ENCODE measurements at regions of chr10 and their contacts with region 1.

Region 1: GRCh38 chr10:125160856-125161706 is 718 bp upstream of the CTBP2 start:
- DNase-seq: peak; percentile 81 to 86 (median 83)
- H3K4me3 ChIP-seq: peak overlapping the region; percentile 78 to 94 (median 80)
- H3K4me3 Mint-ChIP-seq: peak overlapping the region; percentile 81 to 90
- H3K27ac ChIP-seq: peak overlapping the region; percentile 74 to 87
- H3K27ac Mint-ChIP-seq: peak overlapping the region; percentile 59 to 90 (median 77)
- H3K4me1 ChIP-seq: peaks cover 25 to 39% of the 10 kb centered on the region in 2 donors
- H3K4me1 Mint-ChIP-seq: peaks cover 30% of the 10 kb centered on the region
- H3K27me3 ChIP-seq: peaks cover 0 to 8% of the 10 kb centered on the region in 2 donors
- H3K27me3 Mint-ChIP-seq: peaks cover 10 to 18% (median 16%) of the 10 kb centered on the region in 3 donors
- CTCF ChIP-seq: peak; percentile 74

Region 2: DNA sequence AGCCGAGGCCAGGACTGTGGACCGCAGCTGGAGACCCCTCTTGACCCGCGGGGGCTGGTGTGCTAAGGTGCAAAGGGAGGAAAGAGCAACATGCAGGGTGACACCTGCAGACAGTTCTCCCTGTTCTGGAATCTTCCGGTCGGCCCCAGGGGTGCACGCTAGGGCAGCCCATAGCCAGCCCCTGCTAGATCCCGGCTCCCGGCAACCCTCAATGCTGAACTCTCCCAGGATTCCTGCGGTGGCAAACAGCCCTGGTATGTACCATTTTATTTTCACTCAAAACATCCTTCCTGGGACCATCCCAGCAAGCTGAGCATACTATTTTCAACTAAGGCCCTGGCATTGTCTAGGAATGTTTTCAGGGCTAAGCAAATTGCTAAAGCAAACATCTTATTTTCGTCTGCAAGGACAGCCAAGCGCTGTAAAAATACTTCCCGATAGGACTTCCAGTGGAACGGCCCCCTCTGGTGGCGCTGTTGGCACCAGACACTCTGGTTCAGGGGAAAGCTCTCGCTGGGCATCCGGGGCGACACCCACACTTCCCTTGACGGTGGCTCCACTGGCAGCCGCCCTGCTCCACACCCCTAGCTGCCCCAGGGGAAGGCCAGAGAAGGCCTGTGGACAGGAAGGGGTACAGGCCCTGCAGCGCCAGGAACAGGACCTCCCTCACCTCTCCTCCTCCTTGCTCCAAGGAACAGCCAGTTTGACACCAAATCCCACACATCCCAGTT is 100.1 kb before region 1 on chr10:
- intact Hi-C with region 1: loop called in 1 of 2 experiments (anchors 5 kb)
- DNase-seq: peak; percentile 64 to 78 (median 72)
- H3K4me3 ChIP-seq: peak overlapping the region in 1 of 3 experiments; percentile 58
- H3K4me3 Mint-ChIP-seq: peak overlapping the region in 1 of 2 donors; percentile 82
- H3K27ac ChIP-seq: peak overlapping the region; percentile 41 to 62
- H3K27ac Mint-ChIP-seq: peak overlapping the region; percentile 74 to 92 (median 90)
- H3K4me1 ChIP-seq: peaks cover 72 to 87% of the 10 kb centered on the region in 2 donors
- H3K4me1 Mint-ChIP-seq: peaks cover 81% of the 10 kb centered on the region
- H3K27me3 ChIP-seq: no peaks in the 10 kb centered on the region
- H3K27me3 Mint-ChIP-seq: peaks cover 0 to 6% (median 2%) of the 10 kb centered on the region in 3 donors
- CTCF ChIP-seq: peak; percentile 87

Region 3: DNA sequence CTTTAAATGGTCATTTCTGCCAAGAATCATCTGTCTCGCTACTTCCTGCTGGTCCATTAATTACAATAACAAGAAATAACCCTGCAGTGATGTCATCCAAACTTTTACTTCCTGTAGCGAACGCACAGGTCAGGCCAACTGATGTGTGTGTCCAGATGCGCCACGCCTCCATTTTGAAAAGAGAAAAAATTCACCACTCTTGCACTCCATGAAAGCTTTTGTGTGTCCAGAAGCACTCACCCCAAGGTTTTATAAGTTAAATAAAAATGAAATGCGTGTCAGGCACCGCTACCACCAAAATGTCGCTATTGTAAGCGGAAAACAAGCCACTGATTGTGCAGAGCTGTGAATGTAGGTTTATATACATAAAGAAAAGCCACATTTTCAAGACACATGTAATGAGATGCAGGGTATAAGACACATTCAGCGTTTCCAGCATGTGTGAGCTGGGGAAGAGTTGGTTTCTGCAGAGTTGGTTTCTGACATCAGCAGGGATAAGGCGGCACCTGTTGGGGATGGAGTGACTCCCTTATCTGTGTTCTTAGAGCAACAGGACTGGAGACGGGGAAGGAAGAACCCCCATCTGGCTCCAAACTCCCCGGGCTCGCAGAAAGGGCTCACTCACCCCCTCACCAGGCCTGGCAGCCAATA is 84.1 kb before region 1 on chr10:
- intact Hi-C with region 1: no loop called
- DNase-seq: no peak
- H3K4me3 ChIP-seq: no peak overlapping the region
- H3K4me3 Mint-ChIP-seq: no peak overlapping the region
- H3K27ac ChIP-seq: peak overlapping the region in 1 of 2 donors; percentile 17
- H3K27ac Mint-ChIP-seq: peak overlapping the region in 4 of 7 donors; percentile 2 to 37 (median 32)
- H3K4me1 ChIP-seq: no peaks in the 10 kb centered on the region
- H3K4me1 Mint-ChIP-seq: peaks cover 2% of the 10 kb centered on the region
- H3K27me3 ChIP-seq: no peaks in the 10 kb centered on the region
- H3K27me3 Mint-ChIP-seq: no peaks in the 10 kb centered on the region
- CTCF ChIP-seq: no peak

Region 4: DNA sequence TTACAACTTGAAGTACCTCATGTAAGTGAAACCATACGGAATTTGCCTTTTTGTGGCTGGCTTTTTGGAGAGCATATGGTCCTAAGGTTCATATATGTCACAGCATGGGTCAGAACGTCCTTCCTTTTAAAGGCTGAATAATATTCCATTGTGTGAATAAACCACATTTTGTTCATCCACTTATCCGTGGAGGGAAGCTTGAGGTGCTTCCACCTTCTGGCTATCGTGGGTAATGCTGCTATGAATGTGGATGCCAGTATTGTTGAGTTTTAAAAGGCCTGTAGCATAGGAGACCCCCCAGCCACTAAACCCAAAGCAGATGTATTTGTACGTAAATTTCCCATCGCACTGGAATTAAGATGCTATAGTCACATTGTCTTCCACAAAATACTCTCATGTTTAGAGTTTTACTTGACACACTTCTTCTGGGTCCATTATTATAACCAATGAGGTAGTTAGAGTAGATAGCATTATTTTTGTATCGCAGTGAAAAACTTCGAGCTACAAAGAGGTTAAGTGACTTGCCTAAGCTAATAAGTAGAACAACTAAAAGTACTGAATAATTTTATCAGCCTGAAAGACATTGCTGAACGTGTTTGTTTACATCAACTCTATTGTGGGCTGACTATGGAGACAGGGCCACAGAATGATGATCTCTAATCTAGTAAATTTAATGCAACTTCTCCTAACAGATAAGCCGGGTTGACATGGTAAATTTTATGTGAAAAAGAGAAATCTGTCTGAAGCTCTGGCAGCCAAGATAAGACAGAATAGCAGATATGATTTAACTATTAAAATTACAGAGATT is 182.2 kb after region 1 on chr10:
- intact Hi-C with region 1: loop called (anchors 5 to 10 kb)
- DNase-seq: peak; percentile 2 to 8 (median 4)
- H3K4me3 ChIP-seq: no peak overlapping the region
- H3K4me3 Mint-ChIP-seq: no peak overlapping the region
- H3K27ac ChIP-seq: no peak overlapping the region
- H3K27ac Mint-ChIP-seq: no peak overlapping the region
- H3K4me1 ChIP-seq: no peaks in the 10 kb centered on the region
- H3K4me1 Mint-ChIP-seq: no peaks in the 10 kb centered on the region
- H3K27me3 ChIP-seq: no peaks in the 10 kb centered on the region
- H3K27me3 Mint-ChIP-seq: peaks cover 3 to 5% (median 4%) of the 10 kb centered on the region in 3 donors
- CTCF ChIP-seq: peak; percentile 62

Region 5: DNA sequence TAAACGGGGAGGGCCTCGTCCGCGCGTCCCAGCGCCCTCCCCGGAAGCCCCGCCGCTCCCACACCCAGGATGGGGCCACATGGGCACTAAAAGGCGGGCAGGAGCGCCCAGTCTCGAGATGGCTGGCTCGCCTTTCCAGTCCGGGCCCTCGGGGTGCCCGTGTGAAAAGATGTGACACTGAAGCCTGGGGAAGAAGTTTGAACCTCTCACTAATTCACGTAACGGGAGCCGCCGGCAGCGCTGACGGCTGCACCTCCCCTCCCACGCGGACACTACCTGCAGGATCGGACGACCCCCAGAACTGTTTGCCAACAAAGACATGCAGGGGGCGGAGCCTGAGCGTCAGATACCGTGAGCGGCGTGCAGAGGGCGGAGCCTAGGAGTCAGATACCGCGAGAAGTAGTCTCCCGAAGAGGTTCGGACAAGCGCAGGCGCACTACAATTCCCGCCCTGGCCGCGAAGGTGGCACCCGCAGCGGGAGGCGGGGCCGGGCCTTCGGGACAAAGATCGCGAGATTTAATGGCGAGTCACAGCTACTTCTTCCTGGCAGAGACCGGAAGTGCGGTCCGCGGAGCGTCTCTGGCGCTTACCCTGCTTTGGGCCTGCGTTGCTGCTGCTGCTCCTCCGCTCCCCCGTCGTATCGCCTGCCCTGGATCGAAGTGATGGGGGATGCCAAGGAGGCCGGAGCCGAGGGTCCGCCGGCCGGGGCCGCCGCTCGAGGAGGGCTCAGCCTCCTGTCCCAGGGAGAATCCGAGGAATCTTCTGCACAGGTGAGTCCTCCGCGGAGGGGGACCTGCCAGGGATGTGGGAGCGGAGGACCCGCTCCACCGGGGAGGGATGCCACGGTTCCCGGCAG is 558.3 kb after region 1 on chr10 and contains the start of gene EDRF1:
- intact Hi-C with region 1: loop called in 1 of 2 experiments (anchors 10 kb)
- DNase-seq: peak; percentile 98 to 99 (median 98)
- H3K4me3 ChIP-seq: peak within 1 kb of the TSS; percentile 86 to 99 (median 92)
- H3K4me3 Mint-ChIP-seq: peak within 1 kb of the TSS; percentile 98
- H3K27ac ChIP-seq: peak within 1 kb of the TSS; percentile 78 to 99
- H3K27ac Mint-ChIP-seq: peak within 1 kb of the TSS; percentile 92 to 98 (median 96)
- H3K4me1 ChIP-seq: peaks cover 14 to 25% of the 10 kb centered on the region in 2 donors
- H3K4me1 Mint-ChIP-seq: peaks cover 15% of the 10 kb centered on the region
- H3K27me3 ChIP-seq: no peaks in the 10 kb centered on the region
- H3K27me3 Mint-ChIP-seq: peaks cover 0 to 2% (median 0%) of the 10 kb centered on the region in 3 donors
- CTCF ChIP-seq: no peak
- polyA plus RNA-seq, gene EDRF1: 4.6 to 21.4 (median 5.3) TPM

Region 6: DNA sequence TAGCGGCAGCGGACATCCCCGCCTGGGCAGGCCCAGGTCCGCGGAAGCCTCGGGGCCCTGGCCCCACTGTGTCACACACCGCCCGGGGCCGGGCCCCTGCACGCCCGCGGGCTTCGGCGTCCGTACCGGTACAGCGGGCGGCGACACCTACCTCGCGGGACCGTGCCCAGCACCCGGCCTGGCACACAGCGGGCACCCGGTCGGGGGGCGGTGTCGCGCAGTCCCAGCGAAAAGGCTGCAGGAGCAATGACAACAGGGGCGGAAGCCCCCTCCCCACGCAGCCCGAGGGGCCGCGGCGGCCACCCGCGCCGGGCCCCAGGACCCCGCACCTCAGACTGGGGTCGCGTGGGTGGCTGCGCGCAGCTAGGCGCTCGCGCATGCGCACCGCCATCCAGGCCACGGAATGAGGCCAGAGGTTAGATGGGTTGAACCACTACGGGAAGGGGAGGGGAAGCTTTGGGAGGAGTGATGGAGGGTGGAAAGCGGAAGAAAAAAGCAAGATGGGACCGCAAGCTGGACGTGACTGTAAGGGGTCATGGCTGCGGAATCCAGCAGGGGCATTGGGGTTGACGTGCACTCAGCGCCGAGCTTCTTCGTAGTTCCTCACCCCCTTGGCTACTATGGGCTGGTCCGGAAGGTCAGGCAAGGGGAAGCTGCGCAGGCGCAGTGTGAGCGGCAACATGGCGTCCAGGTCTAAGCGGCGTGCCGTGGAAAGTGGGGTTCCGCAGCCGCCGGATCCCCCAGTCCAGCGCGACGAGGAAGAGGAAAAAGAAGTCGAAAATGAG is 662.0 kb after region 1 on chr10 and contains the starts of genes BCCIP and UROS:
- intact Hi-C with region 1: loop called (anchors 10 kb)
- DNase-seq: peak; percentile 93 to 96 (median 93)
- H3K4me3 ChIP-seq: peak within 1 kb of the TSS; percentile 85
- H3K4me3 Mint-ChIP-seq: peak within 1 kb of the TSS; percentile 75
- H3K27ac ChIP-seq: peak within 1 kb of the TSS; percentile 83 to 93
- H3K27ac Mint-ChIP-seq: peak within 1 kb of the TSS in 6 of 7 donors; percentile 31 to 80 (median 39)
- H3K4me1 ChIP-seq: peaks cover 30 to 33% of the 10 kb centered on the region in 2 donors
- H3K4me1 Mint-ChIP-seq: peaks cover 32% of the 10 kb centered on the region
- H3K27me3 ChIP-seq: no peaks in the 10 kb centered on the region
- H3K27me3 Mint-ChIP-seq: no peaks in the 10 kb centered on the region
- CTCF ChIP-seq: no peak
- polyA plus RNA-seq, gene BCCIP: 16.0 to 61.7 (median 59.3) TPM
- polyA plus RNA-seq, gene UROS: 18.1 to 42.3 (median 39.8) TPM

Measured in CD14-positive monocyte (primary cell).